Posterior vena cava (tissue), 2 donors: ENCODE measurements at regions of chr6 and their contacts with region 1.

Region 1: GRCh38 chr6:33521489-33522091 is 58.5 kb downstream of the BAK1 start:
- DNase-seq: no peak

Region 2: DNA sequence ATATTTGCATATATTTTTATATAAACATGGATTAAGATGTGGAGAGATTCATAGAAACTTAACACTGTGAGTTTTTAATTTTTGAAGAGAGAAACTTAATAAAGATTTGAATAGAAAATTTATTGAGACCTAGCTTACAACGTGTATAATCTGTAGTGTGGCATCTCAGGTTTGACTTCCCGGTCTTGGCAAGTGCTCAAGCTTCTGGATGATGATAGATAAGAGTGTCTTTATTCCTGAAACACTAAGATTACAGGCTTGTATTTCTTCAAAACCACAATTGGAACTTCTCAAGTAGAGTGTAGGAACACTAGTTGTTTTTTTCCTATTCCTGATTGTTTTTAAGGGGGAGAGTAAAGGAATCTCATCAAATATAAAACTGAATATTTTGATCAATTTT is 1233.2 kb before region 1 on chr6:
- intact Hi-C with region 1: loop called in 1 of 2 experiments (anchors 5 kb)
- DNase-seq: no peak